HCT116 (cell line): ENCODE measurements at regions of chr19 and their contacts with region 1.

Region 1: DNA sequence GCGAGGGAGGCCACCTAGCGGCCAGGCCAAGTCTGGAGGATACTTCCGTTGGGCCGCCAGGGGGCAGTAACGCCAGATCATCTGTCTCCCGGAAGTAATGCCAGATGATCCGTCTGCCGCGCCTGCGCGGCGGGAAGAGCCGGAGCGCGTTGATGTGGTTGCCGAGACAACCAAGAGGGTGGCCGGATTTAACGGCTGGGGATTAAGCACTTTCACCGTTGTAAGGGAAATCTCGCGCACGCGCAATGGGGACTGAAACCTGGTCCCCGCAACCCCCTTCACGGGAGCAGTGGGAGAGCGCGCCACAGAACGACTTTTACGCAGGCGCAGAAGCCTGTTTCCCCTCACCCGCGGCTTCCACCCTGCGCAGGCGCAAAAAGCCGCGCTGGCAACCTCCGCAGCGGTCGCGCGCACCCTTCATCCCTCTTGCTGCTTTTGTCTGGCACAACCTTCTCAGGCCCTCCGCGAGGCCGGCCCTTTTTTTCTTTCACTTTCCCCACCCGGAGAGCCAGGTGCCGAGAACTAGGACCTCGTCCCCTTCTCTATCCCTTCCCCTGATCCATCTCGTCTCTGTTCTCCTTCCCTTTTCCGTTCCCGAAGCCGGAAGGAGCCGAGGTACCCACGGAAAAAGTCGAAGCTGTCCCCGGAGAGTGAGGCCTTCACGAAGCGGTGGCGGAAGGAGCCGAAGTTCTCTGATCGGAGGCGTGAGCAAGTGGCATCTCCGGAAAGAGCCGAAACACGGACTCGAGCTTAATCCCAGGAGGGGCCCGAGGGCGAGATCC is 886 bp upstream of the U2AF2 start:
- DNase-seq: peak; percentile 99
- ATAC-seq: peak; percentile 83
- H3K4me3 ChIP-seq: peak overlapping the region; percentile 67 to 87
- H3K27ac ChIP-seq: peak overlapping the region; percentile 85
- H3K4me1 ChIP-seq: peaks cover 18 to 29% of the 10 kb centered on the region in 2 experiments; a peak in 3 of 4 replicates
- H3K27me3 ChIP-seq: no peaks in the 10 kb centered on the region
- CTCF ChIP-seq: peak; percentile 97 to 100 (median 100)
- POLR2A ChIP-seq: no peak
- RAD21 ChIP-seq: no peak

Region 2: DNA sequence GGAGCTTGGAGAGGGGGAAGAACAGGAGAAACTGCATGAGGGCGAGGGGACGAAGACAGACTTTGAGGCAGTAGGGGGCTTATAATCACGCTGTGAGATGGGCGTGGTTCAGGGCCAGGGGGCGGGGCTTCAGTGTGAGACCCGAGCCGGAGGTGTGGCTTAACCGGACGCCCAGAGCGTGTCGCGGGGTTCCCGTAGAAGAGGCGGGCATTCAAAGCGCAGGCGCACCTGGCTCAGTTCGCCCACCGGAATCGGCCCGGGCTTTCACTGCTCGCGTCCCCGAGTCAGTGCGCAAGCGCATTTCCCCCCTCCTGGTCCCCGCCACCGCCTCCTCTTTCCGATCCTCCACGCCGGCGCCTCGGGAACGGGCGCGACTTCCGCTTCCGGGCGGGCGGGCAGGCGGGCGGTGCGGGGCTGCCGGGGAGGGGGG is 48.7 kb before region 1 on chr19:
- CTCF ChIA-PET with region 1: interaction called, 10 read pairs
- POLR2A ChIA-PET with region 1: interaction called, 7 read pairs
- RAD21 ChIA-PET with region 1: no interaction called
- intact Hi-C with region 1: no loop called
- DNase-seq: peak; percentile 92
- ATAC-seq: peak; percentile 81
- H3K4me3 ChIP-seq: peak overlapping the region; percentile 89 to 93
- H3K27ac ChIP-seq: peak overlapping the region; percentile 98
- H3K4me1 ChIP-seq: peaks cover 26 to 46% of the 10 kb centered on the region in 2 experiments
- H3K27me3 ChIP-seq: no peaks in the 10 kb centered on the region
- CTCF ChIP-seq: no peak
- POLR2A ChIP-seq: no peak
- RAD21 ChIP-seq: no peak

Region 3: GRCh38 chr19:55643348-55644176 is 10.4 kb before region 1 on chr19 and contains the start of gene ZNF581:
- CTCF ChIA-PET with region 1: interaction called, 12 read pairs
- POLR2A ChIA-PET with region 1: interaction called, 15 read pairs
- RAD21 ChIA-PET with region 1: no interaction called
- intact Hi-C with region 1: no loop called
- DNase-seq: no peak
- ATAC-seq: peak; percentile 48
- H3K4me3 ChIP-seq: peak within 1 kb of the TSS; percentile 94 to 97
- H3K27ac ChIP-seq: peak within 1 kb of the TSS; percentile 96
- H3K4me1 ChIP-seq: peaks cover 16 to 48% of the 10 kb centered on the region in 2 experiments; a peak in 3 of 4 replicates
- H3K27me3 ChIP-seq: no peaks in the 10 kb centered on the region
- CTCF ChIP-seq: no peak
- POLR2A ChIP-seq: no peak
- RAD21 ChIP-seq: no peak
- total RNA-seq, gene ZNF581: 44.4 TPM

Region 4: DNA sequence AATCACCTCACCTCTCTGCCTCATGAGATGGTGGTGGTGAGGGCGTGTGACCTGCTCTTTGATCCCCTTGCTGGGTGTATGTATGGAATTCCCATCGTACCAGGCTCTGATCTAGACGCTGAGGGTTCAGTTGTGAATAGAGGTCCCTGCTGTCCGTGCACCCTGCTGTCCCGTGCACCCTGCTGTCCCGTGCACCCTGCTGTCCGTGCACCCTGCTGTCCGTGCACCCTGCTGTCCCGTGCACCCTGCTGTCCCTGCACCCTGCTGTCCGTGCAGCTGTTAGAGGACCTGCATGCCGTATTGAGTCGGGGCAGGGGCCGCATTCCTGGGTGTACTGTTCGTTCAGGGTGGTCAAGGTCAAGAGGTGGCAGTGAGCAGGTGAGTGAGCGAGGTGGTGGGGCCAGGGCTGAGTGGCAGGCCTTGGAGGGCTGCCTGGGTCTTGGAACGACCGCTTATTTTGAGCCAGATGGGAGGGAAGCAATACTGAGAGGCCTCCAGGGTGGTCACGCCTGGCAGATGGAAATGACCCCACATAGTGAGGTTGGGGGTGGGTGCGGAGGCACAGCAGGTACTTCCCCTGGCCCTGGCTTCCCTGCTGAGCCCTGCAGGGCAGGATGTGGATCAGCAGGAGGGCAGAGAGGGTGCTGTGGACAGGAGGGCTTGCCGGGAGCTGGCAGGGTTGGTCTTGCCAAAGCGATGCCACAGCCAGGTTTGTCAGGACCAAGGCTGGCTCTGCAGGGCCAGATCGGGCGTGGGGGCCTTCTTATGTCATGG is 16.5 kb after region 1 on chr19:
- CTCF ChIA-PET with region 1: interaction called, 23 read pairs
- POLR2A ChIA-PET with region 1: interaction called, 8 read pairs
- RAD21 ChIA-PET with region 1: no interaction called
- intact Hi-C with region 1: no loop called
- DNase-seq: no peak
- ATAC-seq: no peak
- H3K4me3 ChIP-seq: no peak overlapping the region
- H3K27ac ChIP-seq: peak overlapping the region; percentile 10; the same call in 1 of the 2 replicates
- H3K4me1 ChIP-seq: peaks cover 7 to 49% of the 10 kb centered on the region in 2 experiments
- H3K27me3 ChIP-seq: no peaks in the 10 kb centered on the region
- CTCF ChIP-seq: no peak
- POLR2A ChIP-seq: no peak
- RAD21 ChIP-seq: no peak